ENCODE measurements at regions of chr10 and their contacts with region 1.

Region 1: DNA sequence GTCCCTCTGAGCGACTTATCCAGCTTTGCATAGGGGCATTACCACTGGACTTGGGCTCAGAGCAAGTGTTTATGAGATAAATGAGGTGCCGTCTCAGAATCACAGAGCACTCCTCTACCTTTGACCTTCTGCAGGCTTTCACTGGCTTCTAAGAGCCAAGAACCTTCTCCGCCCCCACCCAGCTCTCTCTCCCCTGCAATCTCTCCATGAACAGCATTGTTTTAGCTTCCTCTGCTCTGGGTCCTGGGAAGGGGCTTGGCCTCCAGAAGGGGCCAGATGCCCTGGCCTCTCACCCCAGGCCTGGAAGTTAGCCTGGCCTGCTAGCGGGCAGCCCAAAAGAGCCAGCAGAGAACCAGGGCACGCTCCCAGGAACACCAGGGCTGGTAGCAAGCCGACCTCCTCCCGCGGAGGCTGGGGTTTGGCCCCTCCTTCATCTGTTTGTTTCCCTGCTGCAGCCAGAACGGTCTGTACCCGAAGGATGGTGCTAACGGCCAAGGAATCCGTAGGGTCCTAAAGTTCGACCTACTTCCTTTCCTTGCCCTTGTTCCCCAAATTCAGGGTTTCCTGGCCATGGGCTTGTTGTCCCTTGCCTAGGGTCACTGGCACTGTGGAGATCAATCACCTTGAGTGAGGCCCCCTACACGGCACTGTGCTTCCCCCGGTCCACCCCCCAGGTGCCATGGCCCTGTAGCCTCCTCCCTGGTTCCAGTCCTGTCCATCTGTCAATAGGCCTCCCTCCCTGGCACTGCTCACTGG is 18.7 kb upstream of the DDIT4 start:
- DNase-seq: peak; percentile 93
- H3K4me3 Mint-ChIP-seq: peak overlapping the region; percentile 46
- H3K27ac Mint-ChIP-seq: peak overlapping the region; percentile 88
- H3K4me1 Mint-ChIP-seq: peaks cover 48% of the 10 kb centered on the region
- H3K27me3 Mint-ChIP-seq: no peaks in the 10 kb centered on the region
- CTCF ChIP-seq: no peak

Region 2: DNA sequence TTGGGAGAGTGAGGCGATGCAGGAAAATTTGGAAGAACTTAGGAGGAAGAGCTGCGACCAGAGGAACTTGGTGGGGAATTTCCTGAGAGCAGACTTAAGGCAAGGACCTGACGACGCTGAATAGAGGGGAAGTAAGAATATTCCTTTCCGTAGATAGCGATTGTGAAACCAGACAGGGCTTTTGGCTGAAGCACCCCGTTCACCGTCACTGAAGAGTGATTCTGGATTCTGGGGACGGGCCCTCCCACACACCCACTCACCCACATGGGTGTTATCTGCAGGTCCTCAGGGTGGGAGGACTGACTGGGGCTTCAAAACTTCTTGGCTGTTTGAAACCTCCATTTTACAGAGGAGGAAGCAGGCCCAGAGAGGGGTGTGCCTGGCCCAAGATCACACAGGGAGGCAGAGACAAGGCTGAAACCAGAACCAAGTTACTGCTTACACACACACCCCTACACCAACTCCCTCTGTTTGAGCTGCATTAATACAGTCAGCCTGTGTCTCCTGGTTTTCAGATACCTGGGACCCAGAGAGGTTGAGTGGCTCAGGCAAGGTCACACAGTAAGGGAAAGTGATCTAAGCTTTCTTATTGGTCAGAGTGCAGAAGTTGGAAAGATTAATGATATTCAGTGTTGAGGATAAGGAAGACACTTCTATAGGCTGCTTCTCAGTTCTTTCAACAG is 895.5 kb before region 1 on chr10:
- CTCF ChIA-PET with region 1: no interaction called
- POLR2A ChIA-PET with region 1: no interaction called
- intact Hi-C with region 1: no loop called
- DNase-seq: no peak
- H3K4me3 Mint-ChIP-seq: no peak overlapping the region
- H3K27ac Mint-ChIP-seq: no peak overlapping the region
- H3K4me1 Mint-ChIP-seq: peaks cover 10% of the 10 kb centered on the region
- H3K27me3 Mint-ChIP-seq: no peaks in the 10 kb centered on the region
- CTCF ChIP-seq: no peak

Region 3: GRCh38 chr10:72215652-72216549 is 39.1 kb before region 1 on chr10 and contains the starts of genes ANAPC16 and ASCC1:
- CTCF ChIA-PET with region 1: interaction called, 6 read pairs
- POLR2A ChIA-PET with region 1: interaction called, 17 read pairs
- intact Hi-C with region 1: no loop called
- DNase-seq: peak; percentile 89
- H3K4me3 Mint-ChIP-seq: peak within 1 kb of the TSS; percentile 100
- H3K27ac Mint-ChIP-seq: peak within 1 kb of the TSS; percentile 92
- H3K4me1 Mint-ChIP-seq: peaks cover 6% of the 10 kb centered on the region
- H3K27me3 Mint-ChIP-seq: no peaks in the 10 kb centered on the region
- CTCF ChIP-seq: no peak
- total RNA-seq, gene ANAPC16: 97.0 and 110 TPM in 2 replicates
- total RNA-seq, gene ASCC1: 26.3 and 31.6 TPM in 2 replicates

Region 4: GRCh38 chr10:72229261-72230251 is 25.4 kb before region 1 on chr10:
- CTCF ChIA-PET with region 1: interaction called, 4 read pairs
- POLR2A ChIA-PET with region 1: interaction called, 23 read pairs
- intact Hi-C with region 1: no loop called
- DNase-seq: peak; percentile 91
- H3K4me3 Mint-ChIP-seq: no peak overlapping the region
- H3K27ac Mint-ChIP-seq: peak overlapping the region; percentile 68
- H3K4me1 Mint-ChIP-seq: peaks cover 25% of the 10 kb centered on the region
- H3K27me3 Mint-ChIP-seq: no peaks in the 10 kb centered on the region
- CTCF ChIP-seq: no peak

Region 5: GRCh38 chr10:72238392-72239175 is 16.4 kb before region 1 on chr10:
- CTCF ChIA-PET with region 1: interaction called, 4 read pairs
- POLR2A ChIA-PET with region 1: interaction called, 143 read pairs
- intact Hi-C with region 1: no loop called
- DNase-seq: no peak
- H3K4me3 Mint-ChIP-seq: no peak overlapping the region
- H3K27ac Mint-ChIP-seq: no peak overlapping the region
- H3K4me1 Mint-ChIP-seq: peaks cover 27% of the 10 kb centered on the region
- H3K27me3 Mint-ChIP-seq: no peaks in the 10 kb centered on the region
- CTCF ChIP-seq: no peak

Measured in MCF 10A (cell line).